ENCODE measurements at regions of chr1 and their contacts with region 1.

Region 1: DNA sequence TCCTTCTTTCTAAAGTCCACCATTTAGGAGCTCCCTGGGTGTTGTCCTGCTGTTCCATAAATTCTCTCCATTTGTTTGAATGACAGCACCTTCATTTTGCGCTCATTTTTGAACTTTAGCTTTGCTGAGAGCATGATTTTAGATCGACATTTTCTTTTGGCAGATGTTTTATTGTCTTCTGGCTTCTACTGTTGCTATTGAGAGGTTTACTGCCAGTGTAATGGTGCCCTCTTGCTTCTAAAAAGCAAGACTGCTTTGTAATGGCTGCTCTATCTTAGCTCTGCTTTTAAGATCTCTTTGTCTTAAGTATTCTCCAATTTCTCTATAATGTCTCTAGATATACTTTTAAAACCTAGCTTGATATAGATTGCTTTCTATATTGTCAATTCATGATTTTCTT is 27.9 kb downstream of the THEM4 start:
- DNase-seq: no peak
- ATAC-seq: no peak
- H3K4me3 ChIP-seq: no peak overlapping the region
- H3K27ac ChIP-seq: no peak overlapping the region
- H3K4me1 ChIP-seq: no peaks in the 10 kb centered on the region
- H3K27me3 ChIP-seq: no peaks in the 10 kb centered on the region
- CTCF ChIP-seq: peak in 1 of 3 experiments; percentile 34; a peak in 1 of 6 replicates
- EP300 ChIP-seq: no peak
- POLR2A ChIP-seq: no peak
- RAD21 ChIP-seq: no peak

Region 2: DNA sequence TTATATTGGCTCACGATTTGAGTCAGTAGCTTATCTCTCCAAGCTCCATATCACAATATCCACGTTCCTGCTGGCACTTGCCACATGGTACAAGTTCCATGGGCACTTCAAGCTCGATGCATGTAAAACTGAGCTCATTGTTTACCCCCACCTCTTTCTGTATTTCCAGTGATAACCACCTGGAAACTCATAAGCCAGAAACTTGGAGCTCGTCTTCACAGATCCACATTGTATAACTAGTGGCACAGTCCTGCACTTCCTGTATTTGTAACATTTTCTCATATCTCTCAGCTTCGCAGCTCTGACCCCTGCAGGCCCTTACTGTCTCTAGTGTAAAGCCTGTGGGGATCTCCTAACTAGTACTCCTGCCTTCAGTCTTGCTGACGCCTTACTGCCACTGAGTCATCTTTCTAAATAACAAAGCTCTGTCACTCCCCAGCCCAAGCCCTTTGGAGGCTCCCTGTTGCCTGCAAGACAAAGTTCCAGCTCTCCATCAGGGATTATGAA is 35.3 kb before region 1 on chr1:
- CTCF ChIA-PET with region 1: interaction called, 10 read pairs
- POLR2A ChIA-PET with region 1: no interaction called
- RAD21 ChIA-PET with region 1: interaction called, 9 read pairs
- SMC1A ChIA-PET with region 1: interaction called, 4 read pairs
- in situ Hi-C with region 1: no loop called
- intact Hi-C with region 1: no loop called
- DNase-seq: no peak
- ATAC-seq: peak; percentile 83
- H3K4me3 ChIP-seq: no peak overlapping the region
- H3K27ac ChIP-seq: no peak overlapping the region
- H3K4me1 ChIP-seq: no peaks in the 10 kb centered on the region
- H3K27me3 ChIP-seq: no peaks in the 10 kb centered on the region; a peak in 1 of 4 replicates
- CTCF ChIP-seq: peak in 1 of 3 experiments; percentile 16; a peak in 1 of 6 replicates
- EP300 ChIP-seq: no peak
- POLR2A ChIP-seq: no peak
- RAD21 ChIP-seq: no peak

Measured in GM12878 (cell line).